Psoas muscle (tissue), 8 donors: ENCODE measurements at regions of chr17 and their contacts with region 1.

Region 1: GRCh38 chr17:50923611-50924010 is 57.5 kb upstream of the TOB1 start:
- DNase-seq: no peak
- ATAC-seq: no peak
- H3K4me3 ChIP-seq: no peak overlapping the region
- H3K27ac ChIP-seq: no peak overlapping the region
- H3K4me1 ChIP-seq: peaks cover 34% of the 10 kb centered on the region
- H3K27me3 ChIP-seq: no peaks in the 10 kb centered on the region
- CTCF ChIP-seq: no peak

Region 2: GRCh38 chr17:50783193-50783660 is 140.4 kb before region 1 on chr17:
- intact Hi-C with region 1: no loop called
- DNase-seq: peak; percentile 82 to 91
- ATAC-seq: peak; percentile 93 to 96 (median 95)
- H3K4me3 ChIP-seq: no peak overlapping the region
- H3K27ac ChIP-seq: no peak overlapping the region
- H3K4me1 ChIP-seq: no peaks in the 10 kb centered on the region
- H3K27me3 ChIP-seq: no peaks in the 10 kb centered on the region
- CTCF ChIP-seq: peak; percentile 96

Region 3: GRCh38 chr17:50834429-50835300 is 88.9 kb before region 1 on chr17:
- intact Hi-C with region 1: no loop called
- DNase-seq: no peak
- ATAC-seq: peak; percentile 39 to 82 (median 64)
- H3K4me3 ChIP-seq: peak overlapping the region; percentile 65
- H3K27ac ChIP-seq: peak overlapping the region; percentile 46
- H3K4me1 ChIP-seq: peaks cover 4% of the 10 kb centered on the region
- H3K27me3 ChIP-seq: no peaks in the 10 kb centered on the region
- CTCF ChIP-seq: no peak

Region 4: DNA sequence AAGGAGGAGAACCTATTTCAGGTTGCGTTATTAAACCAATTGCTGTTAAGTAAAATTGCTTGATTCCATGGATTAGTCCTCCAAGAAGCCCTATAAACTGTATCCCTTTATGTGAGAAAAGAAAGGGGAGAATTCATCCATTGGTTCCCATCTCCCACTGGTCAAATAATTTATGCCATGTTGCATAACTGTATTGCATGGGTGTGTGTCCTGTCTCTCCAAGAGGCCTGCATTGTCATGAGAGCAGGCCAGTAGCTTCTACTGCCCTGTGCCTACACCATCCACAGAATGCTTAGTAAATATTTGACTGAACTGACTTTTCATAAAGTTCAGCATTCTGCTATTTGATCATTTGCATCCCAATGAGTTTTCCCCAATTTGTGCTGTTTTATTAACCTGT is 45.8 kb before region 1 on chr17:
- intact Hi-C with region 1: loop called (anchors 1 to 5 kb)
- DNase-seq: no peak
- ATAC-seq: peak in 1 of 4 donors; percentile 50
- H3K4me3 ChIP-seq: no peak overlapping the region
- H3K27ac ChIP-seq: no peak overlapping the region
- H3K4me1 ChIP-seq: peaks cover 3% of the 10 kb centered on the region
- H3K27me3 ChIP-seq: no peaks in the 10 kb centered on the region
- CTCF ChIP-seq: no peak

Region 5: GRCh38 chr17:50986989-50987660 is 63.5 kb after region 1 on chr17:
- intact Hi-C with region 1: no loop called
- DNase-seq: no peak
- ATAC-seq: peak in 1 of 4 donors; percentile 25
- H3K4me3 ChIP-seq: no peak overlapping the region
- H3K27ac ChIP-seq: no peak overlapping the region
- H3K4me1 ChIP-seq: no peaks in the 10 kb centered on the region
- H3K27me3 ChIP-seq: no peaks in the 10 kb centered on the region
- CTCF ChIP-seq: no peak